ENCODE measurements at regions of chr5 and their contacts with region 1.

Region 1: GRCh38 chr5:131589510-131590348 is 45.3 kb downstream of the RAPGEF6 start:
- DNase-seq: peak; percentile 71
- H3K4me3 ChIP-seq: no peak overlapping the region
- H3K27ac ChIP-seq: no peak overlapping the region
- H3K4me1 ChIP-seq: peaks cover 3% of the 10 kb centered on the region
- CTCF ChIP-seq: peak; percentile 96

Region 2: DNA sequence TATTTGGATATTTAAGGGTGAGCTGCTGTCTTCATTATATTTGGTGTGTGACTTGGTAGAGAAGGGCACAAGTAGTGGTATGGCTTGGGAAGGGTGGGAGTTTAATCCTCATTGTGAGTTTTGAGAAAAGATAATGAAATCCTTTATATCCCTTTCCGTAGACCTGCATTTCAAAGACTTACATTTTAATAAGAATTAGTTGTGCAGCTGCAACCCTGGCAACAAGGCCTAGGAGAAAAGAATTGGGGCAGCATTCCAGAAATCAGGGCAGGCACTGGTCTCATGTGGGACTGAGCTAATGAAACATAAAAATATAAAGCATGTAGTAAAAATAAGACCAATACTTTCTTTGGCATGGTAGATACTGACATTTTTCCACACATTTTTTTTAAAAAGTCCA is 265.4 kb before region 1 on chr5:
- CTCF ChIA-PET with region 1: no interaction called
- POLR2A ChIA-PET with region 1: no interaction called
- intact Hi-C with region 1: no loop called
- DNase-seq: no peak
- H3K4me3 ChIP-seq: no peak overlapping the region
- H3K27ac ChIP-seq: no peak overlapping the region
- H3K4me1 ChIP-seq: no peaks in the 10 kb centered on the region
- CTCF ChIP-seq: no peak

Region 3: GRCh38 chr5:131394128-131394527 is 195.6 kb before region 1 on chr5:
- CTCF ChIA-PET with region 1: no interaction called
- POLR2A ChIA-PET with region 1: no interaction called
- intact Hi-C with region 1: no loop called
- DNase-seq: no peak
- H3K4me3 ChIP-seq: no peak overlapping the region
- H3K27ac ChIP-seq: no peak overlapping the region
- H3K4me1 ChIP-seq: no peaks in the 10 kb centered on the region
- CTCF ChIP-seq: no peak

Region 4: DNA sequence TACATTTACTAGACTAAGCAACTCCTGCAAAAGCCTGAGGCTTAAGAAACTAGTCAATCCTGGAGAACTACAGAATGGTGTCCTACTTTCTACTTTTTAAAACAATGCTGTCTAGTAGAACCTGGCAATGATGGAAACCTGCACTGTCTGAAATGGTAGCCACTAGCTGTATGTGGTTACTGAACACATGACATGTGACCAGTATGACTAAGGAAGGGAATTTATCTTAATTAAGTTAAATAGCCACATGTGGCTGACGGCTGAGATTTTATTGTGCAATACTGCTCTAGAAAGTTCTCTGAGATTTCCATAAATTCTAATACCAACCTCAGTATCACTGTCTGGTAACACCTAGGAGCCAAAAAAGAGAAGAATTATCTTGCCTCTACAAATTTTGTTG is 90.2 kb after region 1 on chr5:
- CTCF ChIA-PET with region 1: interaction called, 3 read pairs
- POLR2A ChIA-PET with region 1: no interaction called
- intact Hi-C with region 1: loop called (anchors 5 kb)
- DNase-seq: no peak
- H3K4me3 ChIP-seq: no peak overlapping the region
- H3K27ac ChIP-seq: no peak overlapping the region
- H3K4me1 ChIP-seq: peaks cover 16% of the 10 kb centered on the region
- CTCF ChIP-seq: no peak

Region 5: DNA sequence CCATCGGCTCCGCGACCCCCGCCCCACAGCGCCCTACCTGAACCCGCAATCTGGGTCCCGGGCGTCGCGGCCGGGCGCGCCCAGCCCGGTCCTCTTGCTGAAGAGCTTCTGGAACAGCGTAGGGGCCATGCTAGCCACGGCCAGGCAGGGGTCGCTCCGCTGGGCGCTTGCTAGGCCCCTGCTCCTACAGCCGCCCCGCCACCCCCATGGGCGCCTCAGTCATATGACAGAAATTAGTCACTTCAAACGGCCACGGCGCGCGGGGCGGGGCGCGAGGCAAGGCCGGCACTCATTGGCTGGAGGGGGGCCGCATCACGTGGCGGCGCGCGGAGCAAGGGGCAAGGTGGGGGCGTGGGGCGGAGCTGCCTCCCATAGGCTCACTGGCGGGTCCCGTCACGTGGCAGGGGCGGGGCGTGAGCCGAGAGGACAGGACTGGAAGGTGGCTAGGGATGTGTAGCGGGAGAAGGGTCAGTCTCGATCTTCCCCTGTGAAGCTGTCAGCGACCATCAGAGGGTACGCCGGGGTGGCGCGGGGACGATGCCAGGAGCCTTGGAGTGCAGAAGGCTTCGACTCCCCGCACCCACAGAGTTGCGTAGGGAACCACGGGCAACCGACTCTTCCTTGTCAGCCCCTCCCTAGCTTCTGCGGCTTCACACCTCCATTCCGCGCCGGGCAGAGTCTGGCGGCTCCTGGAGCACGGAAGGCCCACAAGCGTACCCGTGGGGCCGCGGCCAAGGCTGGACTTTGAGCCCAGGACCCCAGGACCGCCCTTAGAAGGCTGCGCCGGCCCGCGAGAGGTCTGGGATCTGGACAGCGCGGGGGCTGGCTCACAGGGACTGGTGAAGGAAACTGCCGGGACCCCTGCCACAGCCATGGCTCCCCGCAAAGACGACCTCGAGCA is 207.3 kb after region 1 on chr5 and contains the start of gene FNIP1:
- CTCF ChIA-PET with region 1: no interaction called
- POLR2A ChIA-PET with region 1: interaction called, 3 read pairs
- intact Hi-C with region 1: loop called (anchors 1 kb)
- DNase-seq: peak; percentile 97
- H3K4me3 ChIP-seq: peak within 1 kb of the TSS; percentile 87
- H3K27ac ChIP-seq: peak within 1 kb of the TSS; percentile 43
- H3K4me1 ChIP-seq: peaks cover 35% of the 10 kb centered on the region
- CTCF ChIP-seq: no peak
- total RNA-seq, gene FNIP1: 16.1 and 19.4 TPM in 2 replicates

Region 6: GRCh38 chr5:131899692-131900091 is 310.0 kb after region 1 on chr5:
- CTCF ChIA-PET with region 1: no interaction called
- POLR2A ChIA-PET with region 1: no interaction called
- intact Hi-C with region 1: no loop called
- DNase-seq: no peak
- H3K4me3 ChIP-seq: no peak overlapping the region
- H3K27ac ChIP-seq: no peak overlapping the region
- H3K4me1 ChIP-seq: no peaks in the 10 kb centered on the region
- CTCF ChIP-seq: no peak

Region 7: GRCh38 chr5:132007399-132008165 is 417.9 kb after region 1 on chr5:
- CTCF ChIA-PET with region 1: interaction called, 8 read pairs
- POLR2A ChIA-PET with region 1: no interaction called
- intact Hi-C with region 1: loop called (anchors 1 kb)
- DNase-seq: peak; percentile 82
- H3K4me3 ChIP-seq: no peak overlapping the region
- H3K27ac ChIP-seq: no peak overlapping the region
- H3K4me1 ChIP-seq: no peaks in the 10 kb centered on the region
- CTCF ChIP-seq: peak; percentile 87